H1 (cell line): ENCODE measurements at regions of chr3 and their contacts with region 1.

Region 1: GRCh38 chr3:156474560-156475389 is 80.1 kb downstream of the SSR3 start:
- DNase-seq: no peak
- H3K4me3 ChIP-seq: peak overlapping the region in 2 of 4 experiments; percentile 10 to 38; a peak in 2 of 8 replicates
- H3K27ac ChIP-seq: no peak overlapping the region
- H3K4me1 ChIP-seq: no peaks in the 10 kb centered on the region
- H3K27me3 ChIP-seq: no peaks in the 10 kb centered on the region
- CTCF ChIP-seq: peak; percentile 46 to 66 (median 66)
- EP300 ChIP-seq: no peak
- POLR2A ChIP-seq: no peak
- RAD21 ChIP-seq: peak; percentile 54 to 66

Region 2: GRCh38 chr3:156174229-156174847 is 300.4 kb before region 1 on chr3:
- CTCF ChIA-PET with region 1: interaction called, 10 read pairs
- POLR2A ChIA-PET with region 1: no interaction called
- DNase-seq: no peak
- H3K4me3 ChIP-seq: no peak overlapping the region
- H3K27ac ChIP-seq: no peak overlapping the region
- H3K4me1 ChIP-seq: no peaks in the 10 kb centered on the region
- H3K27me3 ChIP-seq: no peaks in the 10 kb centered on the region
- CTCF ChIP-seq: peak in 2 of 3 experiments; percentile 43 to 62; a peak in 3 of 4 replicates
- EP300 ChIP-seq: no peak
- POLR2A ChIP-seq: no peak
- RAD21 ChIP-seq: peak; percentile 80 to 84

Region 3: GRCh38 chr3:156373654-156374053 is 101.1 kb before region 1 on chr3:
- CTCF ChIA-PET with region 1: no interaction called
- POLR2A ChIA-PET with region 1: no interaction called
- DNase-seq: no peak
- H3K4me3 ChIP-seq: peak overlapping the region in 1 of 4 experiments; percentile 7; a peak in 1 of 8 replicates
- H3K27ac ChIP-seq: no peak overlapping the region
- H3K4me1 ChIP-seq: peaks cover 5 to 13% (median 9%) of the 10 kb centered on the region in 4 experiments; a peak in 6 of 7 replicates
- H3K27me3 ChIP-seq: no peaks in the 10 kb centered on the region
- CTCF ChIP-seq: no peak
- EP300 ChIP-seq: no peak
- POLR2A ChIP-seq: no peak
- RAD21 ChIP-seq: no peak

Region 4: GRCh38 chr3:156460206-156460611 is 14.6 kb before region 1 on chr3:
- CTCF ChIA-PET with region 1: interaction called, 228 read pairs
- POLR2A ChIA-PET with region 1: no interaction called
- DNase-seq: no peak
- H3K4me3 ChIP-seq: no peak overlapping the region
- H3K27ac ChIP-seq: no peak overlapping the region
- H3K4me1 ChIP-seq: peaks cover 5 to 17% (median 13%) of the 10 kb centered on the region in 4 experiments; a peak in 5 of 7 replicates
- H3K27me3 ChIP-seq: no peaks in the 10 kb centered on the region
- CTCF ChIP-seq: no peak
- EP300 ChIP-seq: no peak
- POLR2A ChIP-seq: no peak
- RAD21 ChIP-seq: no peak

Region 5: GRCh38 chr3:156489462-156489911 is 14.7 kb after region 1 on chr3:
- CTCF ChIA-PET with region 1: interaction called, 35 read pairs
- POLR2A ChIA-PET with region 1: interaction called, 3 read pairs
- DNase-seq: no peak
- H3K4me3 ChIP-seq: no peak overlapping the region
- H3K27ac ChIP-seq: no peak overlapping the region
- H3K4me1 ChIP-seq: no peaks in the 10 kb centered on the region
- H3K27me3 ChIP-seq: no peaks in the 10 kb centered on the region
- CTCF ChIP-seq: no peak
- EP300 ChIP-seq: no peak
- POLR2A ChIP-seq: no peak
- RAD21 ChIP-seq: no peak

Region 6: DNA sequence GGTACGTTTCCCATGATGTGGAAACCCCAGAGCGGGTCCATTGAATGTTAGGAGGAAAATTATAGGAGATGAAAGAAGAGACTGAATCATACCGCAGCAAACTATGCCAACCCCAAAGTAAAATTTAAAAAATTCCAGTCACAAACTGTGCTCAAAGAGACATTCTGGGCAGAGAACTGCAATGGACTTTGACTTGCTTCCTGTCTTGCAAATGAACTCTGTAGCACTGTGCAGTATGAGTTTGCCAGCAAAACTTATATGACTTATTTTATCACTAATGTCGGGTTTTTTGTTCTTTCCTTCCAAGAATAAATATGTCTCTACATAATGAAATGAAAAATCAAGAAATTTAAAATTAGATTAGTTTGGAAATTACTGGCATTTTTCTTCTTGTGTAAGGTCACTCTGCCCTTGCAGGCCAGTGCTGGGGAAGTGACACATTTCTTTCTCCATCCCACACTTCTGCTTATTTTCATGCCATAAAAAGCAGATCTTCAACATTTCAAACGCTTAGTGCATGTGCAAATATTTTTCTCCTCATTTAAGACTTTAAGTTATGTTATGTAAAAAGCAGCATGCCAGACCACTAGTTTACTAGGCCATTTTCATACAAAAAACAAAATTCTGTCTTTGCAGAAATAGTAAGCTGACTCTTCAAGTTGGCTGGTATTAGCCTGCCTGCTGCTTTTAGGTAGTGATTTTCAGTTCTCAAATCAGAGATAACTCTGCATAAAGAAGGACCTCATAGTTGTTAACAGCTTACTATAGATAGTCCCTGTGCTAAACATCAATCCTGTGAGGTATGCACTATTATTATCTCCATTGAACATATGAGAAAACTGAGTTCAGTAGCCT is 112.4 kb after region 1 on chr3:
- CTCF ChIA-PET with region 1: no interaction called
- POLR2A ChIA-PET with region 1: no interaction called
- DNase-seq: no peak
- H3K4me3 ChIP-seq: no peak overlapping the region
- H3K27ac ChIP-seq: no peak overlapping the region
- H3K4me1 ChIP-seq: no peaks in the 10 kb centered on the region
- H3K27me3 ChIP-seq: no peaks in the 10 kb centered on the region
- CTCF ChIP-seq: no peak
- EP300 ChIP-seq: no peak
- POLR2A ChIP-seq: no peak
- RAD21 ChIP-seq: no peak